Heart left ventricle (tissue), 16 donors: ENCODE measurements at regions of chr17 and their contacts with region 1.

Region 1: GRCh38 chr17:45311760-45312476 is 4.9 kb downstream of the MAP3K14 start:
- DNase-seq: peak; percentile 56 to 80 (median 74)
- ATAC-seq: peak; percentile 33 to 54 (median 44)
- H3K4me3 ChIP-seq: peak overlapping the region in 9 of 12 donors; percentile 10 to 93 (median 21)
- H3K27ac ChIP-seq: peak overlapping the region; percentile 62 to 98 (median 94)
- H3K4me1 ChIP-seq: peaks cover 4 to 96% (median 81%) of the 10 kb centered on the region in 12 donors
- H3K27me3 ChIP-seq: no peaks in the 10 kb centered on the region
- CTCF ChIP-seq: no peak
- POLR2A ChIP-seq: no peak

Region 2: GRCh38 chr17:45235416-45236281 is 76.3 kb before region 1 on chr17:
- intact Hi-C with region 1: no loop called
- DNase-seq: peak in 4 of 5 donors; percentile 72 to 85 (median 78)
- ATAC-seq: peak; percentile 29 to 64 (median 47)
- H3K4me3 ChIP-seq: no peak overlapping the region
- H3K27ac ChIP-seq: peak overlapping the region in 1 of 12 donors; percentile 18
- H3K4me1 ChIP-seq: peaks cover 0 to 32% (median 6%) of the 10 kb centered on the region in 12 donors
- H3K27me3 ChIP-seq: no peaks in the 10 kb centered on the region
- CTCF ChIP-seq: peak; percentile 69 to 83 (median 77)
- POLR2A ChIP-seq: no peak

Region 3: DNA sequence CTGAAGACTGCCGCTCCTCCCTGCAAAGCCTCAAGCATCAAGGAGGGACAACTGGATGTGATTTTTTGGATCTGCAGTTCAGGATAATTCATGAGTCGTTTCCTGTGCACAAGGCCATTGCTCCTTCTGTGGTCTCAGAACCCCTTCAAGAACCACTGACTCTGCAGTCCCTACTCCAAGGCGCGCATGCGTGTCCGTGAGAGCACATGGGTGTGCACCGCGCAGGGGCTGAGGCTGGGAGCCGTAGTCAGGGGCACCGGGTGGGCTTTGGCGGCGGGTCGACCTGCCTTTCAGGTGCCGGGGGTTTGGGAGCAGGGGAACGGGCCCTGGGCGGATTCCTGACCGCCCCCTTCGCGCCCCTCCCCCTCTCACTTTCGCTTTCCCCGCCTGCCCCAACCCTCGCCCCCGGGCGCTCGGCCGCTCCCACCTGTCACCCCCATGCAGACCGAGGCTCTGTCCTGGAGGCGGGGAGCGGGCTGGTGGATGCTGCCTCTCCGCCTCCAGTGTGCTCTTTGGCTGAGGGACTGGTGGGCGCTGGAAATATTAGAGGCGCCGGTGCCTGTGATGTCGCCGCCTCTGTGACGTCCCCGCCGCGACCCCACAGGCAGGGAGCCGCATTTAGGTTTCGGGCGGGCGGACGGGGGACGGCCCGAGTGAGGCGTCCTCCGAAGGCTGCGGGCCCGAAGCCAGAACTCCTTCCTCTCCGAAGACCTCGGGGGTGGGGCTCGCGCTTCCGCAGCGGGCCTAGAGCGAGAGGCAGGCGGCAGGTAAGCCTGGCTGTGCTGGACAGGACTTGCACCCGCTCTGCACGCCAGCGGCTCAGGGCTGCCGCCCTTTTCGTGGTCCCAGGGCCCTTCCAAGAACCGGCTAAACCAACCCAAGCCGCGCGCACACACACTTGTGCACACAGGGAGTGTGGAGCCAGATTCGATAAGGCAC is 50.1 kb before region 1 on chr17 and contains the start of gene SPATA32:
- intact Hi-C with region 1: loop called in 1 of 10 experiments (anchors 5 kb)
- DNase-seq: peak; percentile 60 to 84 (median 70)
- ATAC-seq: peak in 3 of 4 donors; percentile 30 to 43 (median 40)
- H3K4me3 ChIP-seq: peak within 1 kb of the TSS; percentile 27 to 75 (median 64)
- H3K27ac ChIP-seq: peak within 1 kb of the TSS in 10 of 12 donors; percentile 24 to 87 (median 70)
- H3K4me1 ChIP-seq: peaks cover 0 to 41% (median 28%) of the 10 kb centered on the region in 12 donors
- H3K27me3 ChIP-seq: no peaks in the 10 kb centered on the region
- CTCF ChIP-seq: no peak
- POLR2A ChIP-seq: no peak
- total RNA-seq, gene SPATA32: not detected

Region 4: GRCh38 chr17:45277216-45277849 is 34.6 kb before region 1 on chr17:
- intact Hi-C with region 1: loop called in 9 of 10 experiments (anchors 2 to 5 kb)
- DNase-seq: peak; percentile 90 to 97 (median 93)
- ATAC-seq: peak; percentile 62 to 76 (median 67)
- H3K4me3 ChIP-seq: peak overlapping the region in 1 of 12 donors; percentile 33
- H3K27ac ChIP-seq: peak overlapping the region; percentile 28 to 89 (median 78)
- H3K4me1 ChIP-seq: peaks cover 0 to 43% (median 26%) of the 10 kb centered on the region in 12 donors
- H3K27me3 ChIP-seq: no peaks in the 10 kb centered on the region
- CTCF ChIP-seq: peak; percentile 72 to 87 (median 82)
- POLR2A ChIP-seq: peak in 1 of 2 donors; percentile 25

Region 5: DNA sequence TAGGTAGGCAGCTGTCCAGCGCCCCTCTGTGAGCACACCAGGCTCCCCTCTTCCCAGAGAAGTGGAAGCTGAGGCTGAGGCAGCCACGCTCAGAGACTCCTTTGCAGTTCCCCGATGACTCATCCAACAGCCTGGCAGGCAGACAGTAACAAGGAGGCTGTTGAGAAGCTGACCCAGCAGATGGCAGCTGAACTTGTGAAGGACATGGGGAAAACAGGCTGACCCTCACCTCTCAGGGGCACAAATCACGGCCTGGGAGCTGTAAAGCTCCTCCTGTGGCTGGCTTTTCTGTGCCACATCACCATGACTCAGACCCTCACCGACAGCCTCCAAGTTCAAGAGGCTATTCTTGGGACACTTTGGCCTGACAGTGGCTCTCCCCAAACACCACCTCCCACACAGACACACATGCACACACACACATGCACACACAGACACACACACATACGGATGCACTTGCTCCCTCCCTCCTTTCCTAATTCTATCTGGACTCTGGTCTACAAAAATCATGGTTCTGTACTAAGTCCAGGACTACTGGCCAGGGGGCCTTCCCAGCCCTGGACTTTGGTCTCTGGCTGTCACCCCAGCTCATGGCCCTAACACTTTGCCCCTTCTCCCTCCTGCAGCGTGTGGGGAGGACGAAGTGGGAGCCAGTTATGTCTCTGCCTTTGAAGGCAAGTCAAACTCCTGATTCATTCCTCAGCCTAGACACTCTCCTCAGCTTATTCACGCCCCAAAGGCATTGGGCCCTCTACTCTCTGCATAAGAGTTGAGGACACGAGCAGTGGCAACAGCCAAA is 18.3 kb before region 1 on chr17:
- intact Hi-C with region 1: loop called in 1 of 10 experiments (anchors 2 kb)
- DNase-seq: peak; percentile 74 to 93 (median 87)
- ATAC-seq: peak; percentile 56 to 80 (median 74)
- H3K4me3 ChIP-seq: no peak overlapping the region
- H3K27ac ChIP-seq: peak overlapping the region; percentile 51 to 91 (median 87)
- H3K4me1 ChIP-seq: peaks cover 12 to 100% (median 94%) of the 10 kb centered on the region in 12 donors
- H3K27me3 ChIP-seq: no peaks in the 10 kb centered on the region
- CTCF ChIP-seq: peak in 2 of 12 donors; percentile 10 to 25
- POLR2A ChIP-seq: no peak

Region 6: DNA sequence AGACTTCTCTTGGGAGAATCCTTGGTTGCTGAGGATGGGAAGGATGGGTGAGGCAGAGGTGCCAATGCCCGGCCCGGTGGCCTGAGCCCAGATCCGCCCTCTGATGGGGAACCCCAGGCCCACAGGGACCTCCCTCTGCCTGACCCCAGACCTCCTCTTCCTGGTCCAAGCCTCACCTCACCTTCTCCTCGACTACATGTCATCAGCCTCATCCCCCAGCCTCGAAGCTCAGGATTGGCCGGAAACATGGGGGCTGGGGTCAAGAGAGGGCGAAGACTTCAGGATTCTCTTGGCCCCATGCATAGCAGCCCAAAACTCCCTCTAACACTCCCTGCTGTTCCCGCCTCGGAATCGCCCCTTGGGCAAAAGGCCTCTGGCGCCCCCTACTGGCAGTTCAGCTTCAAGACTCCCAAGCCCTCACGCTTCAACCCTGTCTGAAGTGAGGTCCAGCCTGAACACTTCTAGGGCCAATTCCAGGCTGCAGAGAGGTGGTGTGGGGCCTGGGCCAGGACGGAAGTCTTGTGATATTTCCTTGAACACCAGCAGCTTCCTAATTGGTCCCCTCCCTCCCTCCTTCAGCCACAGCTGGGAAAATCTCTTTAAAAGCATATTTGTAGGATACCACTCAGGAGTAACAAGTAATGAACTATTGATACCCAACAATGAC is 73.5 kb after region 1 on chr17:
- intact Hi-C with region 1: loop called in 2 of 10 experiments (anchors 5 kb)
- DNase-seq: peak; percentile 88 to 94 (median 89)
- ATAC-seq: peak; percentile 86 to 95 (median 90)
- H3K4me3 ChIP-seq: no peak overlapping the region
- H3K27ac ChIP-seq: peak overlapping the region in 1 of 12 donors; percentile 63
- H3K4me1 ChIP-seq: peaks cover 0 to 31% (median 14%) of the 10 kb centered on the region in 12 donors
- H3K27me3 ChIP-seq: peaks cover 0 to 3% (median 0%) of the 10 kb centered on the region in 9 donors
- CTCF ChIP-seq: peak; percentile 91 to 100 (median 98)
- POLR2A ChIP-seq: no peak